ENCODE measurements at regions of chr9 and their contacts with region 1.

Region 1: DNA sequence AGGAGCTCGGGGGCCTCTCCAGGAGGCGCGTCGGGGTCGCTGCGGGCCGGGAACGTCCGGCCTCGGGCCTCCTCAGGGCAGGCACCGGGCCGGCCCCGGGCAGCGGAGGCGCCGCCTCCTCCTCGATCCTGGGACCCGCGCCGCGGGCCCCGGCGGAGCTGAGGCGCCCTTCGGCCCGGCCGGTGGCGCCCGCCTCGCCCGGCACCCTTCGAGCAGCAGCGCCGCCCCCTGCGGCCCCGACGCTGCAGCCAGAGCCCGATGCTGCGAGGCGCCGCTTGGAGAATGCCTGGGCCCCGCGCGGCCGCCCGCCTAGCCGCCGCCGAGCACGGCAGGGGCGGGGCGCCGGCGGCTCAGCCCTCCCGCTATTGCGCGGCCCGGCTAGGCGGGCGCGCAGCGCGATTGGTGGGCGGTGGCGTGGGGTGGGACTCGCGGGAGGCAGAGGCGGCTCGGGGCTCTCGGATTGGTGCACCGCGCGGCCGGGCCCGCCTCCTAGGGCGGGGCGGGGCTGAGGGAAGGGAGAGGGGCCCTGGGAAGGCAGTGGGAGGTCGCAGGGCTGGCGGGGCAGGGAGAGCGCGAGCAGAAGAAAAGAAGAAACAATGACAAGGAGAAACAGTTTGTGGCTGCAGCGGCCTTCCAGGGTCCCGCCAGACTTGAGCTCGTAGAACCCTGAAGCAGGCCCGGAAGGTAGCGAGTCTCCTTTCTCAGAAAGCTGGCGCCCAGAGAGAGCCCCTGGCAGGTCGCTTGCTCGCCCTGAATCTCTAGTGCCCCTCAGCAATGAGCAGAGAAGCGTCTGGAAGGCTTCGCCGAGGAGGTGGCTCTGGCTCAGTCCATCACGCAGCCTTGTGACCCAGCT is at the start of gene EEIG1:
- DNase-seq: peak; percentile 95 to 99 (median 97)
- ATAC-seq: peak; percentile 89
- H3K4me3 ChIP-seq: peak within 1 kb of the TSS; percentile 73 to 91
- H3K4me3 Mint-ChIP-seq: peak within 1 kb of the TSS; percentile 97
- H3K27ac ChIP-seq: peak within 1 kb of the TSS; percentile 62 to 78
- H3K27ac Mint-ChIP-seq: peak within 1 kb of the TSS; percentile 98
- H3K4me1 ChIP-seq: peaks cover 36% of the 10 kb centered on the region
- H3K4me1 Mint-ChIP-seq: peaks cover 47% of the 10 kb centered on the region
- H3K27me3 ChIP-seq: no peaks in the 10 kb centered on the region
- H3K27me3 Mint-ChIP-seq: no peaks in the 10 kb centered on the region
- CTCF ChIP-seq: no peak
- total RNA-seq, gene EEIG1: 359 to 378 TPM

Region 2: GRCh38 chr9:127651697-127652610 is 329.0 kb before region 1 on chr9:
- CTCF ChIA-PET with region 1: no interaction called
- POLR2A ChIA-PET with region 1: no interaction called
- intact Hi-C with region 1: no loop called
- DNase-seq: no peak
- ATAC-seq: no peak
- H3K4me3 ChIP-seq: no peak overlapping the region
- H3K4me3 Mint-ChIP-seq: no peak overlapping the region
- H3K27ac ChIP-seq: no peak overlapping the region
- H3K27ac Mint-ChIP-seq: no peak overlapping the region
- H3K4me1 ChIP-seq: no peaks in the 10 kb centered on the region
- H3K4me1 Mint-ChIP-seq: no peaks in the 10 kb centered on the region
- H3K27me3 ChIP-seq: no peaks in the 10 kb centered on the region
- H3K27me3 Mint-ChIP-seq: no peaks in the 10 kb centered on the region
- CTCF ChIP-seq: no peak

Region 3: DNA sequence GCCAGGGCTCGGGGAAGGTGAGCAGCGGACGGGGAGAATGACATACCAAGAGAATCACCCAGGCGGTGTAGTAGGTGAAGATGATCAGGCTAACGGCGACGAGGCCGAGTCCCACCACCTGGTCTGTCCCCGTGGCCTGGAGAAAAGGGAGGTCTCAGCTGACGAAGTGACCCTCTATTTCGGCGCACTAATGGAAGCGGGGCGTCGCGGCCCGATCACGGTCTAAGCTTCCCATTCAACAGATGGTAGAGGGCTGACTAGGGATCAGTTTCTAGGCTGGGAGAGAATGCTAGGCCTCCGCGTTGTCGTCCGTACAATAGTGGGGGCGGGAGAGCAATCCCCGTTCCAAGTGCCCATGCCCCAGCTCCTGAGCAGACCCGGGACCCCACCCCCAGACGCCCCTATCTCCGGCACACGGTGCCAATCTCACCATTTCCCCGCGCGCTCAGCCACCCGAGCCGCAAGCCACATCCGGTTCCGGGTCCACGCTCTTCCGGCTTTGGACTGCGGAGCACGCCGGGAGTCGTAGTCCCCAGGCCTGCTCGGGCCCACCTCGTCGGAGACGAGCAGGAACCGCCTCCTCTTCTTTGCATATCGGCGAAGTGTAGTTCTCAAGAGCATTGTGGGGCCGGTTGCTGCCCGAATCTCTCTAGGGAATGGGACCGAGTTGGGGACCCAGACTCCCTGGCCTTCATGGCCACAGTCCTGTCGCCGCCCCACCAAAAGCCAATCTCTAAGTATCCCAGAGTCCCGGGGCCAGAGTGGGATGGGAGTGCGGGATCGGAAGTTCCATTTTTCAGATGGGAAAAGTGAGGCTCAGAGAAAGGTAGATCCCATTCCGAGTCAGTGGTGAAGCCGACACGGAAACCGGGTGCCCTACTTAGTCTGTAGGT is 43.3 kb before region 1 on chr9 and contains the start of gene DPM2:
- CTCF ChIA-PET with region 1: interaction called, 573 read pairs
- POLR2A ChIA-PET with region 1: interaction called, 3 read pairs
- intact Hi-C with region 1: loop called (anchors 5 kb)
- DNase-seq: peak; percentile 67 to 94 (median 87)
- ATAC-seq: peak; percentile 87
- H3K4me3 ChIP-seq: peak within 1 kb of the TSS; percentile 70 to 83
- H3K4me3 Mint-ChIP-seq: peak within 1 kb of the TSS; percentile 87
- H3K27ac ChIP-seq: peak within 1 kb of the TSS; percentile 55 to 84
- H3K27ac Mint-ChIP-seq: peak within 1 kb of the TSS; percentile 92
- H3K4me1 ChIP-seq: peaks cover 26% of the 10 kb centered on the region
- H3K4me1 Mint-ChIP-seq: peaks cover 44% of the 10 kb centered on the region
- H3K27me3 ChIP-seq: no peaks in the 10 kb centered on the region
- H3K27me3 Mint-ChIP-seq: no peaks in the 10 kb centered on the region
- CTCF ChIP-seq: no peak
- total RNA-seq, gene DPM2: 40.2 to 42.7 TPM

Region 4: DNA sequence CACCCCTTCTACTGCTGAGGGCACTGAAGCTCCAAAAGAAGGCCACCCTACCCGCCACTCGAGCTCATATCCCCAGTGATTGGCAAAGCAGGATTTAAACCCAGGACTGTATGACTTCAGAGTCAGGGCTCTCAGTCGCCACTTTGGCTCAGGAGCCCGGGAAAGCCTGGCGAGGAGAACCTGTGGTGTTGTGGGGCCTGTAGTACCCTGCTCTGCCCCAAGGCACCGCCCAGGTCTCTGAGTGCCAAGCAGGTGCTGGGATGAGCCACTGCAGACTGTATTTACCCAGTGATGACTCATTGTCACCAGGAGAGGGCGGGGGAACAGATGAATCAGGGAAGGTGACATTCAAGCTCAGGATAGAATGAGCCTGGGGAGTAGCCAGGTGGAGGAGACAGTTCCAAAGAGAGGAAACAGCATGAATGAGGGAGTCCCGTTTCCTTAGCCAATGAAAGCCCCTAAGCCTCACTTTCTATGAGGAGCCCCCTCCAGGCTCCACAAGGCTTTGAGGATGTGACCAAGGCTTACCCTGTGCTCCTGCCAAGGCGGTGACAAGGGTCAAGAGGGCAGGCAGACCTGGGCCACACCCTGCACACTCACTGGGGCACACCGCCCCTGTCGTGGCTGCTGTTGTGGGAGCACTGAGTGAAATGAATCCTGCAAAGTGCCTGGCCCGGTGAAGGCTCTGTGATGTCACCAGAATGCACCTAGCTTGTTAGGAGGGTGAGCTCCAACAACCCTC is 25.5 kb before region 1 on chr9:
- CTCF ChIA-PET with region 1: interaction called, 573 read pairs
- POLR2A ChIA-PET with region 1: interaction called, 220 read pairs
- intact Hi-C with region 1: loop called (anchors 1 kb)
- DNase-seq: peak; percentile 41 to 89 (median 82)
- ATAC-seq: peak; percentile 87
- H3K4me3 ChIP-seq: peak overlapping the region; percentile 4 to 21
- H3K4me3 Mint-ChIP-seq: peak overlapping the region; percentile 68
- H3K27ac ChIP-seq: peak overlapping the region; percentile 3 to 17
- H3K27ac Mint-ChIP-seq: peak overlapping the region; percentile 91
- H3K4me1 ChIP-seq: peaks cover 97% of the 10 kb centered on the region
- H3K4me1 Mint-ChIP-seq: peaks cover 85% of the 10 kb centered on the region
- H3K27me3 ChIP-seq: no peaks in the 10 kb centered on the region
- H3K27me3 Mint-ChIP-seq: no peaks in the 10 kb centered on the region
- CTCF ChIP-seq: peak; percentile 77

Region 5: DNA sequence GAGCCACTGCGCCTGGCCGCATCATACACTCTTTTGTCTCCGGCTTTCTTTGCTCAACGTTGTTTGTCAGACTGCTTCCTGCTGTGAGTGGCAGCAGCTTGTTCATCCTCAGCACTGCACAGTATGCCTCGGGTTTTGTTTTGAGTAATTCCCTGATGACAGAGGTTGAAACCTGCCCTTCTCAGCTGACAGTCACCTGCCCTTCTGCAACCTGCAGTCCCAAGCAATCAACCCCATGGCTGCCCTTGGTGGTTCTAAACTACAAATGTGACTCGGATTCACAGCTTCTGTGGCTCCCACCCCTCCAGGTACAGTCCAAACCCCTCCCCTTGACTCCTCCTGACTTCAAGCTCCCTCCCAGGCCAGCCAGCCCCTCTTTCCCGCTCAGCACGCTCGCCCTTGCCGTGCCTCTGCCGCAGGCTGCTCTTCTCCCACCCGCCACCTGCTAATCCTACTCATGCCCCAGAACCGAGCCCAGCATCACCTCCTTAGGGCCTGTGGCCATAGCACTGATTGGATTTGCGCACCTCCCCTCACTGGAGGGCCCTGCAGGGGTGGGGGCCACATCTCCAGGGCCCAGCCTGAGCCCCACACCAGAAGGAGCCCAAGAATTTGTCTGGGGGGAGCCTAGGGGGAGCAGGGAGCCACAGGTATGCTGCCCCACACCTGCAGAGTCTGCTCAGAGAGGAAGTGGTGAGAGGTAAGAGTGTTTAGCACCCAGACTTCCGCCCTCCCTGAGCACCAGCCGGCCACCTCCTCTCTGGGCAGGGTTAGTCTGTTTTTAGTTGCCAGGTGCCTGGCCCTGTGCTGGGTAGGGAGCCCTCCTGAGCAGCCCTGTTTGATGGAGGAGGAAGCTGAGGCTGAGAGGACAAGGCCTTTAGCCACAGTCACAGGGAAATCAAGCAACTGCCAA is 10.3 kb before region 1 on chr9:
- CTCF ChIA-PET with region 1: interaction called, 4 read pairs
- POLR2A ChIA-PET with region 1: interaction called, 37 read pairs
- intact Hi-C with region 1: loop called in 1 of 2 experiments (anchors 1 kb)
- DNase-seq: peak; percentile 38 to 86 (median 75)
- ATAC-seq: peak; percentile 60
- H3K4me3 ChIP-seq: peak overlapping the region; percentile 32 to 73
- H3K4me3 Mint-ChIP-seq: peak overlapping the region; percentile 88
- H3K27ac ChIP-seq: peak overlapping the region; percentile 67 to 76
- H3K27ac Mint-ChIP-seq: peak overlapping the region; percentile 99
- H3K4me1 ChIP-seq: peaks cover 96% of the 10 kb centered on the region
- H3K4me1 Mint-ChIP-seq: peaks cover 98% of the 10 kb centered on the region
- H3K27me3 ChIP-seq: no peaks in the 10 kb centered on the region
- H3K27me3 Mint-ChIP-seq: no peaks in the 10 kb centered on the region
- CTCF ChIP-seq: no peak

Region 6: GRCh38 chr9:128026773-128027541 is 46.0 kb after region 1 on chr9:
- CTCF ChIA-PET with region 1: interaction called, 214 read pairs
- POLR2A ChIA-PET with region 1: interaction called, 467 read pairs
- intact Hi-C with region 1: loop called (anchors 1 kb)
- DNase-seq: peak in 7 of 9 experiments; percentile 30 to 85 (median 71)
- ATAC-seq: peak; percentile 21
- H3K4me3 ChIP-seq: peak overlapping the region; percentile 7 to 28
- H3K4me3 Mint-ChIP-seq: peak overlapping the region; percentile 76
- H3K27ac ChIP-seq: peak overlapping the region; percentile 76 to 98
- H3K27ac Mint-ChIP-seq: peak overlapping the region; percentile 99
- H3K4me1 ChIP-seq: peaks cover 86% of the 10 kb centered on the region
- H3K4me1 Mint-ChIP-seq: peaks cover 86% of the 10 kb centered on the region
- H3K27me3 ChIP-seq: no peaks in the 10 kb centered on the region
- H3K27me3 Mint-ChIP-seq: no peaks in the 10 kb centered on the region
- CTCF ChIP-seq: no peak

Region 7: DNA sequence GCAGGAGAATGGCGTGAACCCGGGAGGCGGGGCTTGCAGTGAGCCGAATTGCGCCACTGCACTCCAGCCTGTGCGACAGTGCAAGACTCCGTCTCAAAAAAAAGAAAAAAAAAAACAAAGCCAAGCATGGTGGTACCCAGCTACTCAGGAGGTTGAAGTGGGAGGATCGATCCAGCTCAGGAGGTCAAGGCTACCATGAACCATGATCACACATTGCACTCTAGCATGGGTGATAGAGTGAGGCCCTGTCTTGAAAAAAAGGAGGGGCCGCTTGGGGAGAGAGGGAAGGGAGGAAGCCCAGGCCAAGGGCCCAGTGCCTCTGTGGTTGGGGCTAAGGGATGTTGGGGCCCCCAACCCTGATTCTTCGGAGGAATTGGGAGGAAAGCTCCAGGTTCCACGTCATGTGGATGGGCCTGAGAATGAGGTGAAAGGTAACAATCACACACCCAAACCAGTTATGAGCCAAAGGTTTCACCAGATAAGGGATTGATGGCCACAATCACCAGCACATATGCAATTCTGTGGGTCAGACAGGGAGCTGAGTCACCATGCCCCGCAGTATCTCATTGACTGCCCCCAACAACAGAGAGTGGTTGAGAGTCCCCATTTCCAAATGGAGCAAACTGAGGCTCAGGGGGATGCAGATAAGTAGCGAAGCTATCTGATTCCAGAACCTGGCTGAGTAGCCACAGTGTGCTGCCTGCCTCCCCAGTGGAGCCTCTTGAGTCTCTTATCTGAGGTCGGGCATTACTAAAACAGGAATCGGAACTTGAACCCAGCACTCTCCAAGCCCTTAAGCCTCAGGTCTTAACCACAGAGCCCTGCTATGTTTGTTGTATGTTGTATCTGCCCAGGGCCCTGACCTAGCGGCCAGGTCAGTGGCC is 315.6 kb after region 1 on chr9:
- CTCF ChIA-PET with region 1: no interaction called
- POLR2A ChIA-PET with region 1: no interaction called
- intact Hi-C with region 1: no loop called
- DNase-seq: no peak
- ATAC-seq: no peak
- H3K4me3 ChIP-seq: no peak overlapping the region
- H3K4me3 Mint-ChIP-seq: no peak overlapping the region
- H3K27ac ChIP-seq: no peak overlapping the region
- H3K27ac Mint-ChIP-seq: no peak overlapping the region
- H3K4me1 ChIP-seq: no peaks in the 10 kb centered on the region
- H3K4me1 Mint-ChIP-seq: peaks cover 3% of the 10 kb centered on the region
- H3K27me3 ChIP-seq: no peaks in the 10 kb centered on the region
- H3K27me3 Mint-ChIP-seq: no peaks in the 10 kb centered on the region
- CTCF ChIP-seq: no peak

Measured in CD8-positive, alpha-beta T cell (primary cell).